GM23248 (cell line): ENCODE measurements at regions of chr3 and their contacts with region 1.

Region 1: DNA sequence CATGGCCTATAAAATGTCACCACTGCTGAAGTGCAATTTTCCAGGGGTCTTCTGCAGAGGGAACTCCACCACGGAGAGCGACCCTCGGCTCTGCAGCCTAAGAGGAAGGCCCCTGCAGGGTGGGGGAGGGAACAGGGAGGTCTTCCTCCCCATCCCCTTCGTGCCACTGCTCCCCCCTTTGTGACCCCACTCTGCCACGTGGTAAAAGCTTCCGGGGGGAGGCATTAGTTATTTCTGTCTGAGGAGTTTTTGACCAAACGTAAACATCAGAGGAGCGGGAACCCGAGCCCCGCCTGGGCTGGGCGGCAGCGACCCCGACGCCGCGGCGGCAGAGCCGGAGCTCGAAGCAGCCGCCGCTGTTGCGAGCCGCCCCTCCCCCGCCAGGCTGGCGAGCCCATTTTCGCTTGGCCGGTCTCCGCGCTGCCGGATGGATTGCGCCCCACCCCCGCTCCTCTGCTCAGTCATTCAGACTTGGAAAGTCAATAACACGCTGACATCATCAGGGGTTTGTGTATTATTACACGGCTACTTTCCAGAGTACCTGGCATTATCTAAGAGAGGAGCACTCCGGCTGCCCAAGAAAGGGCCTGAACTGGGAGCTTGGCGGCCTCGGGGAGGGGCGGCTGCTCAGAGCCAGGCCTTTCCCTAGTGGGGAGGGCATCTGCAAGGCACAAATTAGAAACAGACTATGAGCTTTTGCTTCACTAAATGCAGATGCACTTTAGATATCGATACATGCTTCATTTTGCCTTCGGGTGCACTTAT is 162.5 kb upstream of the TBL1XR1 start:
- DNase-seq: peak; percentile 100
- H3K4me3 ChIP-seq: peak overlapping the region; percentile 63
- H3K27ac ChIP-seq: peak overlapping the region; percentile 57
- H3K4me1 ChIP-seq: peaks cover 34% of the 10 kb centered on the region
- H3K27me3 ChIP-seq: no peaks in the 10 kb centered on the region

Region 2: DNA sequence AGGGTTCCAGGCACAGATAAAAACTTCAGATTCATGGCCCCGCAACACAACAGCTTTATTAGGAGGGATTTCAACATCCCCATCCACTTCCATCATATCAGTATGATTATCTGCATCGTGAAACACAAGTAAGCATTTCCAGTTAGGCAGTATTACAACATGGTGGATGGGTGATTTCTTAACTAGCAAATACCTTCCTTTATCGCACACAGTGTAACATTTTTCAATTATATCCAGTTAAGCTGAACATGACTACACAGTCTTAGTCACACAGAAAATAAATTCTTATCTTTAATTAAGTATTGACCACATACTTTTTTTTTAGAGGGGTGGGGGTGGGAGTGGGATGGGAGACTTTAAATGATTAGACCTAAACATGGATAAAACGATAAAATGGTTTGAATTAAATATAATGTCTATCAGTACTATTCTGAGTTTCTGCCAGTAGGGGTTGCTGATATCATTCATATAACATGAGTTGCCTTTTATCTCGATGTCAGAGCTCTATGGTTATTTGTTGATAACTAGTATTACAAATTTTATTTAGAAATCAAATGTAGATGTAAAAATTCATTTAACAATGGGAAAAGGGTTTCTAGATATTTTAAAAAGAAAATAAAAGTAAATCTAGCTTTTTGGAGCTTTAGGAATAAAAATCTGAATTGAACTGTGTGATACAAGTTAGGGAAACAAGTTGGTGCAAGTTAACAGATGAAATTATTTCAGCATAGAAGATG is 309.1 kb before region 1 on chr3:
- in situ Hi-C with region 1: loop called (anchors 25 kb)
- DNase-seq: peak; percentile 72
- H3K4me3 ChIP-seq: no peak overlapping the region
- H3K27ac ChIP-seq: no peak overlapping the region
- H3K4me1 ChIP-seq: peaks cover 13% of the 10 kb centered on the region
- H3K27me3 ChIP-seq: no peaks in the 10 kb centered on the region

Region 3: GRCh38 chr3:177197041-177197727 is 162.6 kb before region 1 on chr3 and contains the start of gene TBL1XR1:
- in situ Hi-C with region 1: loop called (anchors 10 kb)
- DNase-seq: peak; percentile 94
- H3K4me3 ChIP-seq: peak within 1 kb of the TSS; percentile 81
- H3K27ac ChIP-seq: peak within 1 kb of the TSS; percentile 82
- H3K4me1 ChIP-seq: peaks cover 16% of the 10 kb centered on the region; the same call in 1 of the 2 replicates
- H3K27me3 ChIP-seq: no peaks in the 10 kb centered on the region
- total RNA-seq, gene TBL1XR1: 62.3 and 87.2 TPM in 2 replicates